T-cell (primary cell): ENCODE measurements at regions of chr2 and their contacts with region 1.

Region 1: GRCh38 chr2:227716501-227716900 is 1.3 kb downstream of the SLC19A3 start:
- DNase-seq: no peak
- ATAC-seq: no peak
- H3K4me3 ChIP-seq: no peak overlapping the region
- H3K4me3 Mint-ChIP-seq: no peak overlapping the region
- H3K27ac ChIP-seq: no peak overlapping the region
- H3K27ac Mint-ChIP-seq: no peak overlapping the region
- H3K4me1 ChIP-seq: peaks cover 0 to 5% of the 10 kb centered on the region in 2 experiments
- H3K4me1 Mint-ChIP-seq: peaks cover 0 to 10% (median 0%) of the 10 kb centered on the region in 3 donors
- H3K27me3 ChIP-seq: peaks cover 8 to 13% of the 10 kb centered on the region in 2 experiments
- H3K27me3 Mint-ChIP-seq: peaks cover 12 to 17% of the 10 kb centered on the region in 2 donors

Region 2: GRCh38 chr2:226995625-226996041 is 720.9 kb before region 1 on chr2:
- CTCF ChIA-PET with region 1: no interaction called
- POLR2A ChIA-PET with region 1: no interaction called
- DNase-seq: no peak
- ATAC-seq: no peak
- H3K4me3 ChIP-seq: no peak overlapping the region
- H3K4me3 Mint-ChIP-seq: no peak overlapping the region
- H3K27ac ChIP-seq: no peak overlapping the region
- H3K27ac Mint-ChIP-seq: no peak overlapping the region
- H3K4me1 ChIP-seq: no peaks in the 10 kb centered on the region
- H3K4me1 Mint-ChIP-seq: no peaks in the 10 kb centered on the region
- H3K27me3 ChIP-seq: no peaks in the 10 kb centered on the region
- H3K27me3 Mint-ChIP-seq: no peaks in the 10 kb centered on the region

Region 3: GRCh38 chr2:227744276-227744675 is 27.8 kb after region 1 on chr2:
- CTCF ChIA-PET with region 1: no interaction called
- POLR2A ChIA-PET with region 1: no interaction called
- DNase-seq: no peak
- ATAC-seq: no peak
- H3K4me3 ChIP-seq: no peak overlapping the region
- H3K4me3 Mint-ChIP-seq: no peak overlapping the region
- H3K27ac ChIP-seq: no peak overlapping the region
- H3K27ac Mint-ChIP-seq: no peak overlapping the region
- H3K4me1 ChIP-seq: no peaks in the 10 kb centered on the region
- H3K4me1 Mint-ChIP-seq: no peaks in the 10 kb centered on the region
- H3K27me3 ChIP-seq: peaks cover 0 to 2% of the 10 kb centered on the region in 2 experiments
- H3K27me3 Mint-ChIP-seq: peaks cover 5 to 7% of the 10 kb centered on the region in 2 donors

Region 4: DNA sequence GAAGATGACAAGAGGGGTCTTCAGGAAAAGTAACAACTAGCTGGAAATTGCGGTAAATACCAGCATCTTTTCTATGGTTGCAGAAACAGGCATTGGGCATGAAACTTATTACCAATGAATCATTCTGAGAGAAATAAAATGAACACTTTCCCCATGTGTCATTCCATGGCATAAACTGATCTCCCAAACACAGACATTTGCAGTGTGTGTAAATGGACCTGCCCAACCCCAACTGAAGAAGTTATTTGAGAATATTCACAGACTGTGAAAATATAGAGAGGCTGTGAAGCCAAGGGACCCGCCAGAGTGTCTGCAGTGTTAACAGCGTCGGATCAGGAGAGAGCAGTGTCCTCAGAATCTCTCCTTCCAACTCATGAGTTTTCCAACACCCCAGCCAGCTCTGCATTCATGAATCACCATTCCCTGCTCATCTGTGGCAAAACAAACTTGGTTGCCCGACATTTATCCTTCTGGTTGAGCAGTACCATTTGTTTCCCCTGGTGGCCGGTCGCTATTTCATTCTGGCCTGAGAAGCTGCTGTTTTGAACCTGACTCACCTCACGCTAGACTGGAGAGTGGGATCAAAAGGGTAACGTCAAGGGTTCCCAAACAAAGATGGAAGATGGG is 1316.2 kb after region 1 on chr2:
- CTCF ChIA-PET with region 1: no interaction called
- POLR2A ChIA-PET with region 1: interaction called in 1 of 2 experiments, 13 read pairs
- DNase-seq: no peak
- ATAC-seq: no peak
- H3K4me3 ChIP-seq: no peak overlapping the region
- H3K4me3 Mint-ChIP-seq: no peak overlapping the region
- H3K27ac ChIP-seq: no peak overlapping the region
- H3K27ac Mint-ChIP-seq: no peak overlapping the region
- H3K4me1 ChIP-seq: no peaks in the 10 kb centered on the region
- H3K4me1 Mint-ChIP-seq: no peaks in the 10 kb centered on the region
- H3K27me3 ChIP-seq: no peaks in the 10 kb centered on the region
- H3K27me3 Mint-ChIP-seq: no peaks in the 10 kb centered on the region